CD4-positive, alpha-beta T cell (primary cell): ENCODE measurements at regions of chr21 and their contacts with region 1.

Region 1: GRCh38 chr21:42107881-42108553 is 36.9 kb downstream of the UMODL1 start:
- DNase-seq: peak; percentile 42 to 85 (median 68)
- ATAC-seq: peak; percentile 95
- H3K4me3 ChIP-seq: peak overlapping the region; percentile 46
- H3K4me3 Mint-ChIP-seq: peak overlapping the region; percentile 75
- H3K27ac ChIP-seq: no peak overlapping the region
- H3K27ac Mint-ChIP-seq: peak overlapping the region; percentile 69
- H3K4me1 ChIP-seq: peaks cover 18% of the 10 kb centered on the region
- H3K4me1 Mint-ChIP-seq: peaks cover 6% of the 10 kb centered on the region
- H3K27me3 ChIP-seq: peaks cover 0 to 2% of the 10 kb centered on the region in 2 experiments
- H3K27me3 Mint-ChIP-seq: no peaks in the 10 kb centered on the region
- CTCF ChIP-seq: peak; percentile 88

Region 2: DNA sequence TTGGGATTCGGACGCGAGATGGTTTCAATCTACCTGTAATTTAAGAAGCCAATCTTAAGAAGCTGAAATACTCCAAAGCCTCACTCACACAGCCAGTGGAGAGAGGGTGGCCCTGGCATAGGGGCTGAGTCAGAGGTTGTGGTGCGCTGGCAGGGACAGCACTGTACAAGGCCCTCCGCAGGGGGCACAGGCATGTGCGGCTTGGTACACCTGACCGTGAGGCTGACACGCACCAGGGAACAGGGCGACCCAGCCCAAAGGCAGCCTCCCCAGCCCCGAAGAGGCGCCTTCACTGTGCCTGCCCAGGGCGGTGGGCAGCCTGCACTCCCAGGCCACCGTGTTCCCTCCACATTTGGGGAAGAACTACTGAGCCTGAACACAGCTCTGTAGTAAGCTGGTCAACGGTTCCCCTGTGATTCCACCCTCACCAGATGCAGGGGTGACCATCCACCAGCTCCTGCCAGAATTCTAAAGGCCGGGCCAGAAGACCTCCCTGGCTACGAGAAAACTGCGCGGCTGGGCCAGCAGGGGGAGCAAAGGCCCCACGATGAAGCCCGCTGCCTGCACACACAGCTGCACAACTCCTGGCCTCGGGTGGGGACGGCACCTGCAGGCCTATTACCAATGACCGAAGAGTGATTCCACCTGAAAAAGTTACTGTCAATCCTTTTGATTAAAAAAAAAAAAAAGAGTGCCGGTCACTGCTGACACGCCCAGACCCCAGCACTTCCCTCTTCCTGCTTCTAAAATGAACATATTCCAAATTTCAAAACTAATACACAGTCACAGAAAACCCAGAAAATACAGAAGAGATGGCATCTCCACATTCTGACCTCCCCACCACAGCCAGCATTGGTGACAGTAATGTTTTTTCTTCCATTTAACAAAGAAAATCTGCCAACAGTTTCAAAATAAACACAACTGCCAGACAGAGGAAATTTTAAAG is 291.5 kb before region 1 on chr21:
- CTCF ChIA-PET with region 1: interaction called, 9 read pairs
- POLR2A ChIA-PET with region 1: interaction called, 4 read pairs
- intact Hi-C with region 1: loop called in 1 of 2 experiments (anchors 2 kb)
- DNase-seq: peak; percentile 44 to 77 (median 53)
- ATAC-seq: peak; percentile 80
- H3K4me3 ChIP-seq: no peak overlapping the region
- H3K4me3 Mint-ChIP-seq: no peak overlapping the region
- H3K27ac ChIP-seq: no peak overlapping the region
- H3K27ac Mint-ChIP-seq: no peak overlapping the region
- H3K4me1 ChIP-seq: peaks cover 4% of the 10 kb centered on the region
- H3K4me1 Mint-ChIP-seq: no peaks in the 10 kb centered on the region
- H3K27me3 ChIP-seq: no peaks in the 10 kb centered on the region
- H3K27me3 Mint-ChIP-seq: no peaks in the 10 kb centered on the region
- CTCF ChIP-seq: peak; percentile 71

Region 3: GRCh38 chr21:41885341-41886029 is 222.5 kb before region 1 on chr21:
- CTCF ChIA-PET with region 1: interaction called, 3 read pairs
- POLR2A ChIA-PET with region 1: no interaction called
- intact Hi-C with region 1: loop called in 1 of 2 experiments (anchors 5 kb)
- DNase-seq: no peak
- ATAC-seq: no peak
- H3K4me3 ChIP-seq: no peak overlapping the region
- H3K4me3 Mint-ChIP-seq: no peak overlapping the region
- H3K27ac ChIP-seq: no peak overlapping the region
- H3K27ac Mint-ChIP-seq: no peak overlapping the region
- H3K4me1 ChIP-seq: no peaks in the 10 kb centered on the region
- H3K4me1 Mint-ChIP-seq: peaks cover 6% of the 10 kb centered on the region
- H3K27me3 ChIP-seq: no peaks in the 10 kb centered on the region
- H3K27me3 Mint-ChIP-seq: no peaks in the 10 kb centered on the region
- CTCF ChIP-seq: no peak

Region 4: DNA sequence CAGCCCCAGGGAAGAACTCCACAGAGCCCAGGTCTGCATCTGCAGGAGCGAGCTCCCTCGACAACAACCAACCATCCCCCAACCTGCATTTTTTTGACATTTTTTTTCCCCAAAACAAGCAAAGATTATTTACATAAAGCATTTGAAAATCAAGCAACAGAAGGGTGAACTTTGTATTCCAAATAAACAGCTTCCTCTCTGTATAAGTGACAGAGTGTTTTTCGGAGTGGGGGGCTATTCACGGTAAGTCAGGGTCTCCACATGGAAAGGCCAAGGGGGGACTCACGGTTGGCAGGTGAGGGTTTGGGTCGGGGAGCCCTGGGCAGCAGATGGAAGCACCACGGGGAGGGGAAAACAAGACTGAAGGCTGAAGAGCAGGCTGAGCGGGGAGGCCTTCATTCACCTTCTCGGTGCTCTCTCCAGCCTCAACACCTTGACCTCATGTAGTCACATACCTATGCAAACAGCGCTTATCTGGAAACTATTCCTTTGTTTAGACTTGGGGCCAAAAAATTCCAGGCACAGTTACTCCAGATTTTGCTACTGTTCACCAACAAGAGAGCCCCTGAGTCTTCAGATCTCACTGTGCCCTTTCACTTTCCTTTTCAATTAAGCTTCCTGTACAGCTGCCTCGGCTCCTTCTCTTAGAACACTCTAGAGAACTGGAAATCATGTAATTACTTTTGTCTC is 181.8 kb before region 1 on chr21:
- CTCF ChIA-PET with region 1: interaction called, 5 read pairs
- POLR2A ChIA-PET with region 1: interaction called, 16 read pairs
- intact Hi-C with region 1: no loop called
- DNase-seq: peak in 11 of 14 experiments; percentile 1 to 80 (median 22)
- ATAC-seq: peak; percentile 92
- H3K4me3 ChIP-seq: peak overlapping the region; percentile 67
- H3K4me3 Mint-ChIP-seq: peak overlapping the region; percentile 90
- H3K27ac ChIP-seq: peak overlapping the region; percentile 75 to 83
- H3K27ac Mint-ChIP-seq: peak overlapping the region; percentile 95
- H3K4me1 ChIP-seq: peaks cover 52% of the 10 kb centered on the region
- H3K4me1 Mint-ChIP-seq: peaks cover 55% of the 10 kb centered on the region
- H3K27me3 ChIP-seq: no peaks in the 10 kb centered on the region
- H3K27me3 Mint-ChIP-seq: no peaks in the 10 kb centered on the region
- CTCF ChIP-seq: no peak

Region 5: GRCh38 chr21:42009831-42010523 is 98.0 kb before region 1 on chr21 and contains the start of gene ZBTB21:
- CTCF ChIA-PET with region 1: interaction called, 25 read pairs
- POLR2A ChIA-PET with region 1: interaction called, 34 read pairs
- intact Hi-C with region 1: loop called (anchors 1 to 2 kb)
- DNase-seq: peak; percentile 96 to 99 (median 98)
- ATAC-seq: peak; percentile 73
- H3K4me3 ChIP-seq: peak within 1 kb of the TSS; percentile 83
- H3K4me3 Mint-ChIP-seq: peak within 1 kb of the TSS; percentile 100
- H3K27ac ChIP-seq: peak within 1 kb of the TSS; percentile 91 to 100
- H3K27ac Mint-ChIP-seq: peak within 1 kb of the TSS; percentile 99
- H3K4me1 ChIP-seq: peaks cover 11% of the 10 kb centered on the region
- H3K4me1 Mint-ChIP-seq: peaks cover 34% of the 10 kb centered on the region
- H3K27me3 ChIP-seq: no peaks in the 10 kb centered on the region
- H3K27me3 Mint-ChIP-seq: no peaks in the 10 kb centered on the region
- CTCF ChIP-seq: no peak
- total RNA-seq, gene ZBTB21: 132 to 139 TPM

Region 6: GRCh38 chr21:42089093-42089631 is 18.9 kb before region 1 on chr21:
- CTCF ChIA-PET with region 1: interaction called, 3 read pairs
- POLR2A ChIA-PET with region 1: interaction called, 14 read pairs
- intact Hi-C with region 1: loop called in 1 of 2 experiments (anchors 1 kb)
- DNase-seq: peak in 6 of 14 experiments; percentile 6 to 60 (median 28)
- ATAC-seq: peak; percentile 91
- H3K4me3 ChIP-seq: no peak overlapping the region
- H3K4me3 Mint-ChIP-seq: peak overlapping the region; percentile 70
- H3K27ac ChIP-seq: no peak overlapping the region
- H3K27ac Mint-ChIP-seq: peak overlapping the region; percentile 81
- H3K4me1 ChIP-seq: peaks cover 12% of the 10 kb centered on the region
- H3K4me1 Mint-ChIP-seq: peaks cover 28% of the 10 kb centered on the region
- H3K27me3 ChIP-seq: no peaks in the 10 kb centered on the region
- H3K27me3 Mint-ChIP-seq: no peaks in the 10 kb centered on the region
- CTCF ChIP-seq: no peak